Heart left ventricle (tissue), 16 donors: ENCODE measurements at regions of chr1 and their contacts with region 1.

Region 1: GRCh38 chr1:2240270-2241156 is 12.4 kb downstream of the SKI start:
- DNase-seq: peak; percentile 76 to 90 (median 87)
- ATAC-seq: peak; percentile 39 to 77 (median 61)
- H3K4me3 ChIP-seq: peak overlapping the region in 5 of 12 donors; percentile 1 to 36 (median 7)
- H3K27ac ChIP-seq: peak overlapping the region in 9 of 12 donors; percentile 7 to 89 (median 38)
- H3K4me1 ChIP-seq: peaks cover 11 to 95% (median 90%) of the 10 kb centered on the region in 12 donors
- H3K27me3 ChIP-seq: no peaks in the 10 kb centered on the region
- CTCF ChIP-seq: no peak
- POLR2A ChIP-seq: no peak

Region 2: GRCh38 chr1:1959840-1960479 is 280.6 kb before region 1 on chr1:
- intact Hi-C with region 1: no loop called
- DNase-seq: peak; percentile 83 to 91 (median 86)
- ATAC-seq: peak; percentile 71 to 95 (median 90)
- H3K4me3 ChIP-seq: peak overlapping the region in 5 of 12 donors; percentile 9 to 19 (median 10)
- H3K27ac ChIP-seq: no peak overlapping the region
- H3K4me1 ChIP-seq: peaks cover 0 to 12% (median 7%) of the 10 kb centered on the region in 12 donors
- H3K27me3 ChIP-seq: peaks cover 0 to 51% (median 16%) of the 10 kb centered on the region in 9 donors
- CTCF ChIP-seq: peak; percentile 64 to 88 (median 80)
- POLR2A ChIP-seq: no peak

Region 3: DNA sequence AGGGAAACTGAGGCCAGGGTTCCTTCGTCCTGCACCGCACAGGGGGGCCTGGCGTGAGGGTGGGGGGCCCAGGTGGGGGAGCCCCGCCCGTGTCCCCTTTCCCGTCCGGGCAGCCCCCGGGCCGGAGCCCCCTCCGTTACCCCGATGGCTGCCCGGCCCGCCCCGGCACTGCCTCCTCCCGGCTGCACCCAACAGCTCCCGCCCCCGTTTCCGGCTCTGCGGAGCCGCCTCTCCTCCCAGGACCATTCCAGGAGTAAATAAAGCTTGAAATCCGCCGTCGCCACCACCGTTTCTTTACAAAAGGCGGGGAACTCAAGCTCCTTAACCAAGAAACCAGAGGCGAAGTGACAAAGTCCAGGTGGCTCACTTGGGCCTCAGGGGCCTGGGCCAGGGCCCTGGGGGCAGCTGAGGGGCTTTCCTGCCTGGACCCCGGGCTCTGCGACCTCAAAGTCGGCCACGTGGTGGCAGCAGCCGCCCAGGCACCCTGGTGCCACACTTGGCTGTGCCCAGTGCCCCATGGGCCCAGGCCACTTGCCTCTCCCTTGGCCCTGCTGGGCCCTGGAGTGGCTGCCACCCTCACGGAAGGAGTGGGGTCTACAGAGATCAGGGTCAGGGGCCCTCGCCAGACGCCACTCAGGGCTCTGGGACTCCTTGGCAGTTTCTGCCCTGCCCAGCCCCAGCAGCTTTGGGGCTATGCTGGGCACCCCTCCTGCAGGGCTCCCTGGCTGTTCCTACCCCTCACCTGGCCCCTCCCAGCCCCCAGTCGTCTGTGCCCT is 45.4 kb before region 1 on chr1:
- intact Hi-C with region 1: no loop called
- DNase-seq: peak; percentile 92 to 95 (median 94)
- ATAC-seq: peak; percentile 62 to 79 (median 76)
- H3K4me3 ChIP-seq: peak overlapping the region; percentile 51 to 88 (median 73)
- H3K27ac ChIP-seq: peak overlapping the region; percentile 82 to 98 (median 95)
- H3K4me1 ChIP-seq: peaks cover 6 to 67% (median 54%) of the 10 kb centered on the region in 12 donors
- H3K27me3 ChIP-seq: no peaks in the 10 kb centered on the region
- CTCF ChIP-seq: peak; percentile 85 to 98 (median 96)
- POLR2A ChIP-seq: peak in 1 of 2 donors; percentile 31

Region 4: GRCh38 chr1:2270260-2271100 is 30.0 kb after region 1 on chr1:
- intact Hi-C with region 1: loop called in 1 of 10 experiments (anchors 5 kb)
- DNase-seq: peak in 1 of 5 donors; percentile 62
- ATAC-seq: peak in 3 of 4 donors; percentile 2 to 12 (median 4)
- H3K4me3 ChIP-seq: peak overlapping the region in 2 of 12 donors; percentile 2 to 7
- H3K27ac ChIP-seq: peak overlapping the region in 10 of 12 donors; percentile 4 to 77 (median 44)
- H3K4me1 ChIP-seq: peaks cover 30 to 100% (median 93%) of the 10 kb centered on the region in 12 donors
- H3K27me3 ChIP-seq: no peaks in the 10 kb centered on the region
- CTCF ChIP-seq: no peak
- POLR2A ChIP-seq: no peak

Region 5: DNA sequence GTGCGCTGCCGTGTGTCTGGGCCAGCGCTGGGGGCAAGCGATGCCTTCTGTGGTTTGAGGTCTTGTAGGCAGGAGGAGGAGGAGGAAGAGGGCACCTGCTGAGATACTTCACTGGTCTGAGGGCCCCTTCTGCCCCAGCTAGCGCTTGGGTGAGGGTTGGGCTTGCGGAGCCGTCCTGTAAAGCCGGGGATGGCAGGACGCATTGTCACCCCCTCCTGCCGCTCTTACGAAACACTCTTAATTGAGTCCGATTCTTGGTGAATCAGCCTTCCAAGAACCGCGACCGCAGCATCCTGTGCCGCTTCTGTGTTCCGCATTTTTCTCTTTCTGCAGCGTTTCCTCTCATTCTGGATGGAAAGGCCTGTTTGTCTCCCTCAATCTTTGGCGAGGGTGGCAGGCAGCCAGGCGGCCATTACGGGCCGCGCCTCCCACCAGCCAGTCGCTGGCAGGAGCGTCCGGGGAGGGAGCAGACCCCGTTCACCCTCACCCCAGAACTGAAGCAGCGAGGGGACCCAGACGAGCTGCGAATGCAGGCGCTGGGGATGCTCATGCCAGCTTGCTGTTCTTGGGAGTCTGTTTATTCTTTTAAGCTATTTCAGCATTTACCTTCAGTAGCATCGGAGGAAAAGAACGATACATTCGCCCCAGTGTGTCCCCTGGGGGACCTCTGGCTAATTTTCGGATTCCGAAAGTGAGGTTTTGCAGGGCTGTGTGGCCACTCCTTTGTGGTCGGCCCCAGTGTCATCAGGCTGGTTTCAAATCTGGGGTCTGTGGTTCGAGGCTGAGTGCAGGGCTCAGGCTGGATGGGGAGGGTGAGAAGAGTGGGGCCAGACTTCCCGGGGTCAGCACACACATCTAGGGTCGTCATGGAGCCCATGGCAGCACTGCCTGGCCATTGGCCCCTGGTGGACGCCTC is 50.3 kb after region 1 on chr1:
- intact Hi-C with region 1: loop called in 2 of 10 experiments (anchors 5 to 10 kb)
- DNase-seq: peak; percentile 82 to 89 (median 88)
- ATAC-seq: peak; percentile 61 to 81 (median 77)
- H3K4me3 ChIP-seq: peak overlapping the region in 9 of 12 donors; percentile 18 to 53 (median 36)
- H3K27ac ChIP-seq: peak overlapping the region; percentile 56 to 97 (median 75)
- H3K4me1 ChIP-seq: peaks cover 14 to 92% (median 77%) of the 10 kb centered on the region in 12 donors
- H3K27me3 ChIP-seq: no peaks in the 10 kb centered on the region
- CTCF ChIP-seq: no peak
- POLR2A ChIP-seq: no peak

Region 6: DNA sequence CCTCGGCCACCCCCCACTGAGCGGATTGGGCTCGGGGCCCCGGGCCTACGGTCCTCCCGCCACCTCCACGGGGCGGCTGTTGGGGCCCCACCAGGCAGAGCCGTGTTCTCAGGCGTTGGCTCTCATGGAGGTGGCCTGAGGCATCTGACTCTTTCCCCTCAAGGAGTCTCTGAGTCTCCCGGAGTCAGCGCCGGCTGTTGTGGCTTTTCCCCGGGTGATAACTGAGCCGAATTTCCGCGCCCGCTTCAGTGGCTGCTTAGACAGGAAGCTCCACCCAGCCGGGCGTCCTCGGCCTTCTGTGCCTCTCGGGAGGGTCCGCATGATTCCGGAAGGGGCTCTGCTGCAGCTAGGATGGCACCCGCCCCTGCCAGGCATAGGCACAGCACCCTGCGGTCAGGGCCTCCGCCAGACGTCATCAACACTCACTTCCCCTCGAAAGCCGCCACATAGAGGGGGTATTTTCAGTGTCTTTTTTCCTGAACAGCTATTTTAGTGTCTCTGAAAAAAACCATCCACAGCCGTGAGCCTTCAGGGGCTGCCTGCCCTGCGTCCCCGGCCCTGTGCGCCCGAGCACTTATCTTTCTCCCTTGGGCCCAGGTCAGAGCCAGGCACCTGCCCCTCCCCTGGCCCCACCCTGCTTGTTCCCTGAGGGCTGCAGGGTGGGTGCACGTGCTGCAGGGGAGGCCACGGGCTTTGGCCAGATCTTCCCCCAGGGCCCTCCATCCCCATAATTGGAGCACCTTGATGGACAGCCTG is 60.5 kb after region 1 on chr1:
- intact Hi-C with region 1: loop called in 2 of 10 experiments (anchors 5 to 10 kb)
- DNase-seq: peak; percentile 87 to 94 (median 90)
- ATAC-seq: peak; percentile 55 to 76 (median 62)
- H3K4me3 ChIP-seq: peak overlapping the region in 11 of 12 donors; percentile 21 to 59 (median 37)
- H3K27ac ChIP-seq: peak overlapping the region; percentile 74 to 99 (median 89)
- H3K4me1 ChIP-seq: peaks cover 23 to 78% (median 46%) of the 10 kb centered on the region in 12 donors
- H3K27me3 ChIP-seq: no peaks in the 10 kb centered on the region
- CTCF ChIP-seq: no peak
- POLR2A ChIP-seq: no peak